Dorsolateral prefrontal cortex (tissue), 120 donors: ENCODE measurements at regions of chr19 and their contacts with region 1.

Region 1: GRCh38 chr19:6632002-6632621 is 37.8 kb downstream of the TNFSF14 start:
- DNase-seq: peak in 4 of 10 donors; percentile 41 to 61 (median 56)
- H3K4me3 ChIP-seq: no peak overlapping the region
- H3K27ac ChIP-seq: no peak overlapping the region
- H3K27me3 ChIP-seq: peaks cover 0 to 4% (median 0%) of the 10 kb centered on the region in 45 donors
- CTCF ChIP-seq: peak in 55 of 56 donors; percentile 55 to 93 (median 84)

Region 2: DNA sequence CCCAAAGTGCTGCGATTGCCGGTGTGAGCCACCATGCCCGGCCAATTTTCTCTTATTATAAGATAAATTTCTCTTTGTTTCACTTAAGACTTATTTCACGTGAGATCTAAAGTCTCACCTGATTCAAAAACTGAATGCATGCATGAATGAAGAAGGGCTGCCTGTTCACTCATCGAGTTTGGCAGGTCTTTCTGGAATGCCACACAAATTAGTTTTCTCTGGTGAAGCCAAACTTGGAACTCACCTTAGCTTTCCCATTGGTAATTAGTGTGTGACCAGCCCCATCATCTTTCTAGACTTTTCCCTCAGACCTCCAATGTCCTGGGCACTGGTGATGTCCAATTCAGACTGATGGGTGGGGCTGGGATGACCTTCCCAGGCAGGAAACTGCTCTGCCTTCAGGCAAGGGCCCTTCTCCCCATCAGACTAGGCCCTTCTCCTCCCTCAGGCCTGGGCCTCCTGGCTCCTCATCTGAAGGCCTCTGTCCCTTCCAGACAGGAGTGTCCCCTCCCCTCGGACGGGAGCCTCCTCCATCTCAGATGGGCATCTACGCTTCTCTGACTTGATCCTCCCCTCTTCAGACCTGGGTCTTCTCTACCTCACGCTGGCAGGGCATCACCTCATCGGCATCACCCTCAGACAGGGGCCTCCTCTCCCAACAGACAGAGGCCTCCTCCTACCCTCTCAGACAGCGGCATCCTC is 74.0 kb after region 1 on chr19:
- intact Hi-C with region 1: no loop called
- DNase-seq: no peak
- H3K4me3 ChIP-seq: no peak overlapping the region
- H3K27ac ChIP-seq: no peak overlapping the region
- H3K27me3 ChIP-seq: peaks cover 0 to 49% (median 17%) of the 10 kb centered on the region in 45 donors
- CTCF ChIP-seq: no peak

Region 3: DNA sequence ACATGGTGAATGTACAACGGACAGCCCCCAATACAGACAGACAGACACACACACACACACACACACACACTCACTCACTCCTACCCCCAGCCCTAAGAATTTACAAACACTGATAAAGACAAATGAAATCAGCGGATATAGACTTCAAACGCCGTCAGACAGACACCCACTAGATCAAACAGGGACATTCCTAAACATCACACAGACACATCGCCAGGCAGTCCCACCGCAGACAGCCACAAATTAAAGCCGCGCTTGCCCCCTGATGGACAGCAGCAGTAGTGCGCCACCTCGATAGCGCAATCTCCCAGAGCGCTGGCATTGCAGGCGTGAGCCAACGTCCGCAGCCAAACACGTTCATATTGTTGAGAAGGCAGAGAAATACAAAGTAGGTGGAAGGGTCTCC is 230.6 kb after region 1 on chr19:
- intact Hi-C with region 1: loop called (anchors 2 to 10 kb)
- DNase-seq: peak; percentile 19 to 83 (median 78)
- H3K4me3 ChIP-seq: peak overlapping the region in 48 of 59 donors; percentile 7 to 57 (median 37)
- H3K27ac ChIP-seq: no peak overlapping the region
- H3K27me3 ChIP-seq: peaks cover 0 to 7% (median 0%) of the 10 kb centered on the region in 45 donors
- CTCF ChIP-seq: peak; percentile 55 to 91 (median 81)